ENCODE measurements at regions of chr14 and their contacts with region 1.

Region 1: DNA sequence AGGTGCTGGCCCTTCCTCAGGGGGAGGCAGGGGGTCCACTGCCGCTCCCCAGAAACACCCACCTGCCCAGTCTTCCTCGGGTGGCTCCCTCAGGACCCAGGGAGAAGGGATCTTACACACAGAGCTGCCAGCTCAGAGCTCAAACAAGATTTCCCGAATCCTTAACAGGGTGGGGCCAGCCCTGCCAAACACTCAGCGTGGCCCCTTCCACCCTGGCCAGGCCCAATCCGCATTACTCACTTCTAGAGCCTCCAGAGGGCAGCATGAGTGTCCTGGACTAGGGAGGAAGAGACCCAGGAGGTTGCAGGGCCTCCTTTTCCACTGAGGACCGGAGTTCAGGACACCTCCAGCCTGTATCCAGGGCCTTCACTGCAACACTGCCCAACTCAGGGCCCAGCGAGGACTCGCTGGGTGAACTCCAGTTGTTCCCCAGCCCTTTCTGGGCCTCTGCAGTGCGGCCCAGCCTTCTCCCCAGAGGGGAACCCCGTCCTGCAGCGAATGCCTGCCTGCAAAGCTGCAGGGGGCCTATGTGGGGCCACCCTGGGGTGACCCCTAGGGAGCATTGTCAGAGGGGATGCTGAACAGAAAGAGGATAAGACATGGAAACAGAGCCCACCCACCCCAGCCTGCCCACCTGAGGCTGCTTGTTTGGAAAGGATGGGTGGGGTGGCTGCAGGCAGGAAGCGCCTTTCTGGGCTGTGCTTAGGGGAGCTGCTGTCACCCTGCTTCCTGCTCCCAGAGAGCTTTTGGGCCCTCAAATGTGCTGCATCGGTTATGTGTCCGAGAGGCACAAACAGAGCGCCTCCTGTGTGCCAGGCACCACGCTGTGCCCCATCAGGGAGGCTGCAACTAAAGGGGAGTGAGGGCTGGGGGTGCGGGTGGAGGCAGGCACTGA is 43.8 kb downstream of the CCNK start:
- DNase-seq: no peak
- ATAC-seq: peak; percentile 47
- H3K4me3 ChIP-seq: no peak overlapping the region
- H3K27ac ChIP-seq: no peak overlapping the region
- H3K4me1 ChIP-seq: no peaks in the 10 kb centered on the region
- H3K27me3 ChIP-seq: no peaks in the 10 kb centered on the region
- CTCF ChIP-seq: peak in 2 of 3 experiments; percentile 18 to 22; a peak in 1 of 6 replicates
- EP300 ChIP-seq: no peak
- POLR2A ChIP-seq: no peak
- RAD21 ChIP-seq: no peak

Region 2: DNA sequence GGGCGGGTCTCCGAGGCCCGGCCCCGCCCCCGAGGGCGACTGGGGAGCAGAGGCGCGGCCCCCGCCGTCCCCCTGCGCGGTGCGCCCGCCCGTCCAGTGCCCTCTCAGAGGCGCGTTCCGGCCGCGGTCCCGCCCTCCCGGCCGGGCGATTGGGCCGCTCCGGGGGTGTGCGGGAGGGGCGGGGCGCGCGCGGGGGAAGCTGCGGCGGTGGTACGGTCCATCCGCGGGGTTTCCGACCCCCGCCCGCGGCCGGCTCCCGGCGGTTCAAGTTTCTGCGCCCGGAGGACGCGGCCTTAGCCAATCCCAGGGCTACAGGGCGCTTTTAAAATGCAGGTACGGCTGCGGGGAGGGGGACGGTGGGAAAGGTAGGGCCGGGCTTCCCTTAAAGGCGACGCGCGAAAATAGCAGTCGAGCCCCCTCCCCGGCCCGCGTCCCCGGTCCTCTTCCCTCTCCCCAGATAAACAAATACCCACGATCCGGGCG is 79.3 kb after region 1 on chr14:
- CTCF ChIA-PET with region 1: no interaction called
- POLR2A ChIA-PET with region 1: no interaction called
- RAD21 ChIA-PET with region 1: no interaction called
- SMC1A ChIA-PET with region 1: no interaction called
- in situ Hi-C with region 1: no loop called
- intact Hi-C with region 1: no loop called
- DNase-seq: peak; percentile 32
- ATAC-seq: peak; percentile 93
- H3K4me3 ChIP-seq: peak overlapping the region; percentile 83
- H3K27ac ChIP-seq: no peak overlapping the region
- H3K4me1 ChIP-seq: peaks cover 11% of the 10 kb centered on the region; the same call in 1 of the 2 replicates
- H3K27me3 ChIP-seq: no peaks in the 10 kb centered on the region; a peak in 1 of 4 replicates
- CTCF ChIP-seq: no peak
- EP300 ChIP-seq: no peak
- POLR2A ChIP-seq: no peak
- RAD21 ChIP-seq: no peak

Region 3: DNA sequence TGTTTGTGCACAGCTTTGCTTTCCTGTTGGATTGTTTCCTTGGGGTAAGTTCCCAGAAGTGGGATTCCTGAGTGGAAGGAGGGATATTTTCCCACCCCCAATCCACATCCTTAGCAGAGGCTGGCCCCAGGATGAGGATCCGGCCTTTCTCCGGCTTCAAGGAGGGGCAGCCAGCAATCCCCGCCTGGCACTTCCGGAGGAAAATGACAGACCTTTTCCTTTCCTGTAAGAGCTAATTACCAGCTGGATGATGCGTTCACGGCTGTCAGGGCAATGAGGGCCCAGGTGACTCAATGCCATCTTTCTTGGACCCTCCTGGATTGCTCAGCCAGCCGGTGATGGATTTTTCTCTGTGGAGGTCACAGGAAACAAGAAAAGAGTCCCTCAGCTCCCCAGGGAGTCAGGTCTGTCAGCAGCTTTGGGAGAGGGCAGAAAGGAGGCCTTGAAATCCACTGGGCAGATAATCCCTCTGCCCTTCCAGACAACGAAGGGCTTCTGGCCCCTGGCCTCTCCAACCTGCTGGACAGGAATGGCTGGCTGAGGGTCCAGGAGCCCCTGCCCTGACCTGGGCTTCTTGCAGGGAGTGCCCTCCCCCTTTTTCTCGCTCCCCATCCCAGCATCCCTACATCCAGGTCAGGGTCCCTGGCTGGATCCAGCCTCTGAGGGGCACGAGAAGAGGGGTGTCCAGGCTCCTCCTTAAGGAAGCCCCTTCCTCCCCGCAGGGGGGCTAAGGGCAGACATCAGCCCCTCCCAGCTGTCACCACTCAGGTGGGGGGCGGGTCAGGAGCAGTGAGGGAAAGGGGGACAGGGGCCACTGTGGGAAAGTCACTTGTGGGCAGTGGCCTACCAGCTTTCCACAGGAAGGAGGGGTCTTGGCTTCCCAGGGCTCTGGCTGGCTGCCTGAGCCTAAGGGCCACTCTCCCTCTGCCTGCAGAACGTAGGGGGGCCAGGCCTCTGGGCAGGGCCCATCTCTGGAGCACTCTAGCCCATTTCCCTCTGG is 95.1 kb after region 1 on chr14:
- CTCF ChIA-PET with region 1: interaction called, 3 read pairs
- POLR2A ChIA-PET with region 1: no interaction called
- RAD21 ChIA-PET with region 1: no interaction called
- SMC1A ChIA-PET with region 1: no interaction called
- in situ Hi-C with region 1: loop called (anchors 5 kb)
- intact Hi-C with region 1: no loop called
- DNase-seq: no peak
- ATAC-seq: no peak
- H3K4me3 ChIP-seq: no peak overlapping the region
- H3K27ac ChIP-seq: no peak overlapping the region
- H3K4me1 ChIP-seq: no peaks in the 10 kb centered on the region
- H3K27me3 ChIP-seq: peaks cover 0 to 3% of the 10 kb centered on the region in 2 experiments; a peak in 3 of 4 replicates
- CTCF ChIP-seq: no peak
- EP300 ChIP-seq: no peak
- POLR2A ChIP-seq: no peak
- RAD21 ChIP-seq: no peak

Measured in GM12878 (cell line).